CD8-positive, alpha-beta T cell (primary cell): ENCODE measurements at regions of chr14 and their contacts with region 1.

Region 1: GRCh38 chr14:65412032-65412846 is at the start of gene FUT8:
- DNase-seq: peak; percentile 87 to 98 (median 96)
- ATAC-seq: peak; percentile 88
- H3K4me3 ChIP-seq: peak within 1 kb of the TSS; percentile 95 to 98
- H3K4me3 Mint-ChIP-seq: peak within 1 kb of the TSS; percentile 99
- H3K27ac ChIP-seq: peak within 1 kb of the TSS; percentile 75 to 86
- H3K27ac Mint-ChIP-seq: peak within 1 kb of the TSS; percentile 98
- H3K4me1 ChIP-seq: peaks cover 11% of the 10 kb centered on the region
- H3K4me1 Mint-ChIP-seq: peaks cover 43% of the 10 kb centered on the region
- H3K27me3 ChIP-seq: no peaks in the 10 kb centered on the region
- H3K27me3 Mint-ChIP-seq: no peaks in the 10 kb centered on the region
- CTCF ChIP-seq: peak; percentile 43
- total RNA-seq, gene FUT8: 38.3 to 38.5 TPM

Region 2: GRCh38 chr14:64986578-64987571 is 425.4 kb before region 1 on chr14 and contains the start of gene FNTB:
- CTCF ChIA-PET with region 1: no interaction called
- POLR2A ChIA-PET with region 1: interaction called, 13 read pairs
- intact Hi-C with region 1: loop called (anchors 1 kb)
- DNase-seq: peak; percentile 85 to 98 (median 93)
- ATAC-seq: peak; percentile 89
- H3K4me3 ChIP-seq: peak within 1 kb of the TSS; percentile 78 to 79
- H3K4me3 Mint-ChIP-seq: peak within 1 kb of the TSS; percentile 99
- H3K27ac ChIP-seq: peak within 1 kb of the TSS; percentile 57 to 73
- H3K27ac Mint-ChIP-seq: peak within 1 kb of the TSS; percentile 98
- H3K4me1 ChIP-seq: peaks cover 44% of the 10 kb centered on the region
- H3K4me1 Mint-ChIP-seq: peaks cover 55% of the 10 kb centered on the region
- H3K27me3 ChIP-seq: no peaks in the 10 kb centered on the region
- H3K27me3 Mint-ChIP-seq: peaks cover 7% of the 10 kb centered on the region
- CTCF ChIP-seq: peak; percentile 68
- total RNA-seq, gene FNTB: 6.3 to 7.7 TPM

Region 3: DNA sequence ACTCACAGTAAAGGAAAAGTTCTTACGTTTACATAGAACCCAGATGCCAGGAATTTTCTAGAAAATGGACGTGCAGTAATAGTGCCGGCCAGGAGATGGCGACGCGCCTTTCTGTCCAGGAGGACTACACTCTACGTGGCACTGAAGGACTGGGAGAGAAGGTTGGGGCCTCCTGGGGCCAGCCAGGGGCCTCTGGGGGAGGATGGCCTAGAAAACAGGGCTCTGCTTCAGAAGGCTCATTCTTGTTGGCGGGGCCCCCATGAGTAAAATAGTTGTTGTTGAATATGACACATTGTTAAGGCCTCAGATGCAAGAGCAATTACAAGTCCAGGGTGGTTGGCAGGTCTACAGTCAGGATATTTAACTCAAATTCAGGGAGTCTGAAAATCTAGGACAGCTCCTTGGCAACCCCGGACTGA is 189.8 kb before region 1 on chr14:
- CTCF ChIA-PET with region 1: interaction called, 34 read pairs
- POLR2A ChIA-PET with region 1: interaction called, 10 read pairs
- intact Hi-C with region 1: loop called (anchors 1 kb)
- DNase-seq: peak; percentile 12 to 72 (median 53)
- ATAC-seq: peak; percentile 79
- H3K4me3 ChIP-seq: no peak overlapping the region
- H3K4me3 Mint-ChIP-seq: no peak overlapping the region
- H3K27ac ChIP-seq: no peak overlapping the region
- H3K27ac Mint-ChIP-seq: no peak overlapping the region
- H3K4me1 ChIP-seq: peaks cover 8% of the 10 kb centered on the region
- H3K4me1 Mint-ChIP-seq: peaks cover 18% of the 10 kb centered on the region
- H3K27me3 ChIP-seq: no peaks in the 10 kb centered on the region
- H3K27me3 Mint-ChIP-seq: no peaks in the 10 kb centered on the region
- CTCF ChIP-seq: peak; percentile 88

Region 4: DNA sequence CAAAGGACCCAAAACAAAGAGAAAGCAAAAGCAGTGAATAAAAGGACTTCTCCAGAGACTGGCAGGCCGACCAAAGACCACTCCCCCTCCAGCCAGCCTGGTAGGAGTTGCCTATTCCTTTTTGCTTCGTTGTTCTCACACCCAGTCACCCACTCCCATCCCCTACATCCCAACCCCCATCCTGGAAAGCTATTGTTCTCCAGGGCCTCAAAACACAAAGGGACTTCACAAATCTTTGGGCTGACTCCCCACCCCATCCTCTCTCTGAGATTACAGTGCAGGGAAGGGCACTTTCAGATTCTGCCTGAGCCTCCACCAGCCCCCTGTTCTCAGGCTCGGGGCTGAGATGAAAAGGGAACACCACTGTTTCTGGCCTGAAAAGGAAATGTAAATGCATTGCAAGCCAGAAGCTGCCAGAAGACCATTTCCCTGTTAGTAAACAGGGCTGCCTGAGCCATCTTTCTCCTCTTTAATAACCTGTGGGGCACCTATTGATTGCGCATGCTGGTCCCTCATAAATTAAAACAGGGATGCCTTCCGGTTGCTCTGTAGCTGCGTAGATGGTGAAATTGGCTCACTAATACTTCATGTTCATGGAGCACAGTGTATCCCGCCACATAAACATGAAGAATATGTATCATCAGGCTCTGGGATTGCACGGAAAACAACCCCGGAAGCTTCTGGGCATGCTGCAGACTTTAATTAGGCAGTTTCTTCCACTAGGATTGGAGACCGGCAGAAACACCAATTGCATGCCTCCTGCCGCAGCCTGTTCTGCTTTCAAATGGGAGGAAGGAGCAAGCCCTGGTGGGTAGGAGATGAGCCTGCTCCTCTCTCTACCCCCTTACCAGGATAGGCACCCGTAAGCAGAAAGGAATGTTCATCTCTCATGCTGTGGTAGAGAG is 130.0 kb before region 1 on chr14:
- CTCF ChIA-PET with region 1: interaction called, 17 read pairs
- POLR2A ChIA-PET with region 1: interaction called, 57 read pairs
- intact Hi-C with region 1: loop called in 1 of 2 experiments (anchors 1 kb)
- DNase-seq: peak in 3 of 9 experiments; percentile 32 to 58 (median 42)
- ATAC-seq: peak; percentile 51
- H3K4me3 ChIP-seq: peak overlapping the region; percentile 25 to 32
- H3K4me3 Mint-ChIP-seq: peak overlapping the region; percentile 83
- H3K27ac ChIP-seq: peak overlapping the region; percentile 19 to 55
- H3K27ac Mint-ChIP-seq: peak overlapping the region; percentile 95
- H3K4me1 ChIP-seq: peaks cover 32% of the 10 kb centered on the region
- H3K4me1 Mint-ChIP-seq: peaks cover 42% of the 10 kb centered on the region
- H3K27me3 ChIP-seq: no peaks in the 10 kb centered on the region
- H3K27me3 Mint-ChIP-seq: no peaks in the 10 kb centered on the region
- CTCF ChIP-seq: no peak

Region 5: GRCh38 chr14:65336191-65336591 is 76.0 kb before region 1 on chr14:
- CTCF ChIA-PET with region 1: interaction called, 3 read pairs
- POLR2A ChIA-PET with region 1: no interaction called
- intact Hi-C with region 1: loop called in 1 of 2 experiments (anchors 2 kb)
- DNase-seq: peak in 4 of 9 experiments; percentile 17 to 52 (median 26)
- ATAC-seq: peak; percentile 52
- H3K4me3 ChIP-seq: no peak overlapping the region
- H3K4me3 Mint-ChIP-seq: no peak overlapping the region
- H3K27ac ChIP-seq: no peak overlapping the region
- H3K27ac Mint-ChIP-seq: peak overlapping the region; percentile 81
- H3K4me1 ChIP-seq: peaks cover 22% of the 10 kb centered on the region
- H3K4me1 Mint-ChIP-seq: peaks cover 39% of the 10 kb centered on the region
- H3K27me3 ChIP-seq: no peaks in the 10 kb centered on the region
- H3K27me3 Mint-ChIP-seq: no peaks in the 10 kb centered on the region
- CTCF ChIP-seq: no peak

Region 6: DNA sequence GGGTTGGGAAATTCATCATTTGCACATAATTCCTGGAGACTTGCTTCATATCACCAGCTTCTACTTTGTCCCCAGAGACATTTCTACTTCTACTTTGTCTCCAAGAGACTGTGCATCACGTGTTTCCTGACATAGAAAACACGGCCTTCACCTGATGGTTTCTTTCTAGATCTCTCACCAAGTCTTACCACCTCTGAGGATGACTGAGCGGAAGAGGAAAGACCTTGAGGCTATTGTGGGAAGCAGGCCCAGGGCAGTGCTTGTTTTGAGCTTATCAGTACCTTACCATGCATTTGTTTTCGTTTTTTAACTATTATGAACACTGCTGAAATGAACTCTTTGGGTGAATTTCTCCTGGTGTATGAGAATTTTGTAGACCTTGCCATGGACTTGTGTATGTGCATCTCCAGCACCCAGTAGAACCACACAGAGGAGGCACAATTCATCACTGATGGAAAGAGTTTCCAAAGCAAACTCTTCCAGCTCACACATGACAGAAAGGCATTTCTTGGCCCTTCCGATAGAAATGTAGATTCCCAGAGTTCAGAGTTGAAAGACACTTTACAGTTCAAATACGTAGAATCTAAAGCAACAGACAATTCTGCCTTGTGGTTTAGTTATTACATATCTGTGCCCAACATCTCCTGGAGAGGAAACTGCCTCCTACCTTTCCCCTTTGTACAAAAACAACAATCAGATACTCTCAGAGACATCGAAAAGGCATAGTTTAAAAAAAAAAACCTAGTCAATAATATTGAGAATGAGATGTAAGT is 435.0 kb after region 1 on chr14:
- CTCF ChIA-PET with region 1: interaction called, 12 read pairs
- POLR2A ChIA-PET with region 1: interaction called, 25 read pairs
- intact Hi-C with region 1: loop called in 1 of 2 experiments (anchors 5 kb)
- DNase-seq: peak; percentile 41 to 93 (median 70)
- ATAC-seq: peak; percentile 87
- H3K4me3 ChIP-seq: peak overlapping the region; percentile 13 to 21
- H3K4me3 Mint-ChIP-seq: peak overlapping the region; percentile 71
- H3K27ac ChIP-seq: peak overlapping the region; percentile 57 to 84
- H3K27ac Mint-ChIP-seq: peak overlapping the region; percentile 92
- H3K4me1 ChIP-seq: peaks cover 90% of the 10 kb centered on the region
- H3K4me1 Mint-ChIP-seq: peaks cover 85% of the 10 kb centered on the region
- H3K27me3 ChIP-seq: no peaks in the 10 kb centered on the region
- H3K27me3 Mint-ChIP-seq: no peaks in the 10 kb centered on the region
- CTCF ChIP-seq: no peak

Region 7: DNA sequence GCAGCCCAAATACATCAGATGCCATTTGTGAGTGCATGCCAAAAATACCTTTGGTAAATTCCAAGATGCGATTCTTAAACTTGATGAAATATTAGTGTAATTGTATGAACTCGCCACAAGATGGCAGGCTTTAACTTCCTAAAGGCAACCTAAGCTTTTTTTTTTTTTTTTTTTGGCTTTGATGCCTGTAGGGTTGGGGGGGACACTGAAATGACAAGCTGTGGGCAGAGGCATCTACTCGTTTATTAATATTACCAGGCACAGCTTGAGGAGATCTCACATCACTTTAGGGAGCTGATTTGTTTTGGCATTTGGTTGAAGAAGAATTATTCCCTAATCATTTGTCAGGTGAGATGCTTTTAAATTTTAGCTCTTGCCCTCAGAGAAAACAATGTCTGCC is 947.3 kb after region 1 on chr14:
- CTCF ChIA-PET with region 1: no interaction called
- POLR2A ChIA-PET with region 1: no interaction called
- intact Hi-C with region 1: loop called in 1 of 2 experiments (anchors 5 kb)
- DNase-seq: peak in 4 of 9 experiments; percentile 2 to 78 (median 50)
- ATAC-seq: peak; percentile 51
- H3K4me3 ChIP-seq: no peak overlapping the region
- H3K4me3 Mint-ChIP-seq: no peak overlapping the region
- H3K27ac ChIP-seq: no peak overlapping the region
- H3K27ac Mint-ChIP-seq: no peak overlapping the region
- H3K4me1 ChIP-seq: no peaks in the 10 kb centered on the region
- H3K4me1 Mint-ChIP-seq: no peaks in the 10 kb centered on the region
- H3K27me3 ChIP-seq: no peaks in the 10 kb centered on the region
- H3K27me3 Mint-ChIP-seq: no peaks in the 10 kb centered on the region
- CTCF ChIP-seq: peak; percentile 75